Panc1 (cell line): ENCODE measurements at regions of chr5 and their contacts with region 1.

Region 1: DNA sequence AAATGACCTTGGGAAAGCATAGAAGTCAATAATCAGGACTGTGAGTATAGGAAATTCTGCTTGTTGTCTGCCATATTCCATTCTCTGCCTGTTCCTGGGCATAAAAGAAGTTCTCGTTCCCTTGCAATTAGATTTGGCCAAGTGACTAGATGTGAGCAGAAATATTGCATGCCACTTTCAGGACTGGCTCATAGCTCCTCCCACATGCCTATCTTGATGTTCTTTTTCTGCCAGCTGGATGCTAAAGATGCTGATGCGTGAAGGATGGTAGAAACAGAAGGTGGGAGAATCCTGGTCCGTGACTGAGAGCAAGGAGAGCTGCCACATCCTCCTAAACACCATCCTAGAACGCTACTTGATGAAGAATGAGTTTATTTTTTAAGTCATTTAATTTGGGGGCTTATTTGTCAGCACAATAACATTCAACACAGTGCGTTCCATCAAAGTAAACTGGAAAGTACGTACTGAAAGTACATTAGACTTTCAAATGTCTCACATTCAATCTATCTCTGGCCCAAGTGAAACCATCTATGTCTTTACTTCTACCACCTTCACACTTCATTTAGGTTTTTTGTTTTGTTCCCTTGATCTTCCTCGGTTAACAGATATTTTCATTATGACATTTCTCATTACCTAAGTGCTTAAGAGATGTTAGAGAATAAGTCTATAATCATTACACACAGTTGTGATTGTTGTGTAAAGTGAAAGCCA is 648.5 kb downstream of the RAB3C start:
- DNase-seq: no peak
- ATAC-seq: no peak
- H3K4me3 ChIP-seq: no peak overlapping the region
- H3K27ac ChIP-seq: no peak overlapping the region
- H3K4me1 ChIP-seq: no peaks in the 10 kb centered on the region
- H3K27me3 ChIP-seq: no peaks in the 10 kb centered on the region
- CTCF ChIP-seq: no peak

Region 2: GRCh38 chr5:59245198-59245597 is 13.8 kb after region 1 on chr5:
- CTCF ChIA-PET with region 1: interaction called, 11 read pairs
- POLR2A ChIA-PET with region 1: no interaction called
- in situ Hi-C with region 1: no loop called
- intact Hi-C with region 1: no loop called
- DNase-seq: no peak
- ATAC-seq: no peak
- H3K4me3 ChIP-seq: no peak overlapping the region
- H3K27ac ChIP-seq: no peak overlapping the region
- H3K4me1 ChIP-seq: no peaks in the 10 kb centered on the region
- H3K27me3 ChIP-seq: no peaks in the 10 kb centered on the region
- CTCF ChIP-seq: no peak